ENCODE measurements at regions of chr1 and their contacts with region 1.

Region 1: DNA sequence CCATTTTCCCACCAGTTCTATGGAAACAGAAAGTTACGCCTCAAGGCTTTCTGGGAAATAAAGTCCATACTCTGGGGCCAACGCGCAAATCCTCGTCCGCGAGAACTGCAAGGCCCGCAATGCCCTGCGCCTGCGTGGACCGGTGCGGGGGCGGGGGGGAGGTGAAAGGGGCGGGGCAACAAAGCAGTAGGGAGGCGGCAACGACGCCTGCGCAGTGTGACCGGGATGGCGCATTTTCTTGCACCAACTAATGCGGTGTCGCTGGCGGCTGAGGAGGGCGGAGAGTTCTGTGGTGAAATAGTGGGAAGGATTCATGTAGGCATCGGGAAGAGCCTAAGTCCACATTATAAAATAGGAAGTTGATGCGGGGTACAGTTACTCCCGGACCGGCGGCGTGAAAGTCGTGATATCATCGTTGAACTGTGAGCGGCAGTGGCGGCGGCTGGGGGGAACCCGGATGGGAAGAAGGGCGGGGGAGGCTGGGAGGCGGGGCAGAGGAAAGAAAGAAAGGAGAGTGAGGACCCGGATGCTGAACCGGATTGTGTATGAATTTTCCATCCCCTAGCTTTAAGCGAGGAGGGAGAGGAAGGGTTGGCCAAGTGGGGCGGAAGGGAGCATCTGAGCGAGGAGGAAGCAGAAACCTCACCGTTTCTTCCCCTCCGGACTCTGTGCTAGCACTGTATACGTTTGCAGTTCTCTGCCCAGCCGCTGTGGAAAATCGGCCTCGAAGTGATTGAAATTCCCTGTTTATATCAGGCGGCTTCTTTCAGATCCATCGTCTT is at the start of gene GGPS1:
- DNase-seq: peak; percentile 94
- H3K4me3 Mint-ChIP-seq: no peak within 1 kb of the TSS
- H3K27ac Mint-ChIP-seq: no peak within 1 kb of the TSS
- H3K4me1 Mint-ChIP-seq: peaks cover 28% of the 10 kb centered on the region
- H3K27me3 Mint-ChIP-seq: no peaks in the 10 kb centered on the region
- total RNA-seq, gene GGPS1: 28.8 and 29.8 TPM in 2 replicates

Region 2: DNA sequence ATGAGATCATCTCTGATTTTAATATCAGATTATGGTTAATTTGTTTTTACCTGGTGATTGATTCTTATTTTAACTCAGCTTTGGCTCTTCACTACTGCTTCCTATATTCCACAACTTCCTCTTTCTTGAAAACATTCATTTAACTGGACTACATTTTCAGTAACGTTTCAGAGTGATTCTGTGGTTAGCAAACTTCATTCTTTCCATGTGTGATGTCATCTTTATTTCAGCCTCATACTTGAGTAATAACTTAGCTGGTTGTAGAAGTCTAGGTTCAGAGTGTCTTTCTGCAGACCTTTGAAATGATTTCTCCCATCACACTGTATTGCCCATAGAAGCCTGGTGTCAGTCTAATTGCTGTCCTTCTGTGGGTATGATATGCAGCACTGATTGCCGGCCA is 1460.1 kb before region 1 on chr1:
- intact Hi-C with region 1: no loop called
- DNase-seq: no peak
- H3K4me3 Mint-ChIP-seq: no peak overlapping the region
- H3K27ac Mint-ChIP-seq: no peak overlapping the region
- H3K4me1 Mint-ChIP-seq: no peaks in the 10 kb centered on the region
- H3K27me3 Mint-ChIP-seq: no peaks in the 10 kb centered on the region

Region 3: GRCh38 chr1:234722904-234723720 is 605.4 kb before region 1 on chr1:
- intact Hi-C with region 1: loop called (anchors 2 kb)
- DNase-seq: peak; percentile 7
- H3K4me3 Mint-ChIP-seq: peak overlapping the region; percentile 70
- H3K27ac Mint-ChIP-seq: peak overlapping the region; percentile 97
- H3K4me1 Mint-ChIP-seq: peaks cover 79% of the 10 kb centered on the region
- H3K27me3 Mint-ChIP-seq: peaks cover 5% of the 10 kb centered on the region

Region 4: GRCh38 chr1:235128456-235129328 is 199.9 kb before region 1 on chr1 and contains the start of gene TOMM20:
- intact Hi-C with region 1: loop called (anchors 1 kb)
- DNase-seq: peak; percentile 94
- H3K4me3 Mint-ChIP-seq: peak within 1 kb of the TSS; percentile 99
- H3K27ac Mint-ChIP-seq: peak within 1 kb of the TSS; percentile 94
- H3K4me1 Mint-ChIP-seq: peaks cover 45% of the 10 kb centered on the region
- H3K27me3 Mint-ChIP-seq: no peaks in the 10 kb centered on the region
- total RNA-seq, gene TOMM20: 112 and 137 TPM in 2 replicates

Region 5: DNA sequence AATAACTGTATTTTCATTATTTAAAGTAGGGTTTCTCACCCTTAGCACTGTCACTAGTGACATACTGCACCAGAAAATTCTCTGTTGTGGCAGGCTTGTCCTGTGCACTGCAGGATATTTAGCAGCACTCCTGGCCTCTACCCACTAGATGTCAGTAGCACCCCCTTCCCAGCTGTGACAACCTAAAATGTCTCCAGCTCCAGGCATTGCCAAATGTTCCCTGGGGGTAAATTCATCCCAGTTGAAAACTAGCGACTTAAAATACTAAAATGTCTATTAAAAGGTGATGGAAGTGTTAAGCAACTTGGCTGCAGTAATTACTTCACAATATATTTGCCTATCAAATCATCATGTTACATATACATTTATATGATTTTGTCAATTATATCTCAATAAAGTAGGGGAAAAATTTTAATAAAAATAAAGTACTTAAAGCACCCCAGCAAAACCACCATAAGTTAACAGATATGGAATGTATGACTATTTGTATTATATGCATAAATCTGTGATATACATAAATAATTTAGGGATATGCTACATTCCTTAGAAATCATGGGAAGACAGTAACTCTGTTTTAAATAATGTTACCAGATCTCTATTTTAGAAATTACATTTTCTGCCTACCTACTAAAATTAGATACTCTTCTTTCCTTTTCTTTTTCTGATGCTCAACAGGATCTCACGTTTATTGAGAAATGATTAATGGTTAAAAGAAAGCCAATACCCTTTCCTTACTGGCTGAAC is 75.2 kb before region 1 on chr1:
- intact Hi-C with region 1: loop called (anchors 1 kb)
- DNase-seq: peak; percentile 47
- H3K4me3 Mint-ChIP-seq: no peak overlapping the region
- H3K27ac Mint-ChIP-seq: no peak overlapping the region
- H3K4me1 Mint-ChIP-seq: peaks cover 37% of the 10 kb centered on the region
- H3K27me3 Mint-ChIP-seq: no peaks in the 10 kb centered on the region

Region 6: GRCh38 chr1:235317168-235317567 is 11.4 kb before region 1 on chr1:
- intact Hi-C with region 1: loop called (anchors 1 kb)
- DNase-seq: no peak
- H3K4me3 Mint-ChIP-seq: no peak overlapping the region
- H3K27ac Mint-ChIP-seq: peak overlapping the region; percentile 49
- H3K4me1 Mint-ChIP-seq: peaks cover 71% of the 10 kb centered on the region
- H3K27me3 Mint-ChIP-seq: no peaks in the 10 kb centered on the region

Region 7: GRCh38 chr1:235504496-235505222 is 176.1 kb after region 1 on chr1:
- intact Hi-C with region 1: loop called (anchors 1 kb)
- DNase-seq: peak; percentile 98
- H3K4me3 Mint-ChIP-seq: peak overlapping the region; percentile 92
- H3K27ac Mint-ChIP-seq: peak overlapping the region; percentile 97
- H3K4me1 Mint-ChIP-seq: peaks cover 41% of the 10 kb centered on the region
- H3K27me3 Mint-ChIP-seq: peaks cover 16% of the 10 kb centered on the region

Region 8: GRCh38 chr1:235866913-235867845 is 538.6 kb after region 1 on chr1:
- intact Hi-C with region 1: loop called (anchors 1 kb)
- DNase-seq: peak; percentile 99
- H3K4me3 Mint-ChIP-seq: peak overlapping the region; percentile 98
- H3K27ac Mint-ChIP-seq: peak overlapping the region; percentile 98
- H3K4me1 Mint-ChIP-seq: peaks cover 57% of the 10 kb centered on the region
- H3K27me3 Mint-ChIP-seq: no peaks in the 10 kb centered on the region

Measured in activated T-helper 1 cell treated with anti-CD3 and anti-CD28 coated beads, Interleukin-12 subunit alpha, Interleukin-12 subunit beta, Interleukin-2, Interleukin-4 antibody, amounts not matched to agents 30 ng/mL and 10 ng/mL and 1 ng/mL, durations not matched to agents 14 hours and 24 hours and 36 hours (primary cell).